SK-N-SH (cell line): ENCODE measurements at regions of chr22 and their contacts with region 1.

Region 1: GRCh38 chr22:42863349-42863961 is 6.4 kb upstream of the ARFGAP3 start:
- DNase-seq: no peak
- H3K4me3 ChIP-seq: no peak overlapping the region
- H3K27ac ChIP-seq: peak overlapping the region in 1 of 2 experiments; percentile 95; a peak in 2 of 4 replicates
- H3K4me1 ChIP-seq: no peaks in the 10 kb centered on the region
- H3K27me3 ChIP-seq: no peaks in the 10 kb centered on the region
- CTCF ChIP-seq: no peak
- EP300 ChIP-seq: no peak
- RAD21 ChIP-seq: no peak

Region 2: GRCh38 chr22:42932857-42933480 is 69.5 kb after region 1 on chr22:
- CTCF ChIA-PET with region 1: no interaction called
- POLR2A ChIA-PET with region 1: no interaction called
- DNase-seq: no peak
- H3K4me3 ChIP-seq: no peak overlapping the region
- H3K27ac ChIP-seq: peak overlapping the region in 1 of 2 experiments; percentile 99; a peak in 2 of 4 replicates
- H3K4me1 ChIP-seq: peaks cover 2 to 27% of the 10 kb centered on the region in 2 experiments; a peak in 3 of 4 replicates
- H3K27me3 ChIP-seq: no peaks in the 10 kb centered on the region
- CTCF ChIP-seq: no peak
- EP300 ChIP-seq: no peak
- RAD21 ChIP-seq: no peak

Region 3: DNA sequence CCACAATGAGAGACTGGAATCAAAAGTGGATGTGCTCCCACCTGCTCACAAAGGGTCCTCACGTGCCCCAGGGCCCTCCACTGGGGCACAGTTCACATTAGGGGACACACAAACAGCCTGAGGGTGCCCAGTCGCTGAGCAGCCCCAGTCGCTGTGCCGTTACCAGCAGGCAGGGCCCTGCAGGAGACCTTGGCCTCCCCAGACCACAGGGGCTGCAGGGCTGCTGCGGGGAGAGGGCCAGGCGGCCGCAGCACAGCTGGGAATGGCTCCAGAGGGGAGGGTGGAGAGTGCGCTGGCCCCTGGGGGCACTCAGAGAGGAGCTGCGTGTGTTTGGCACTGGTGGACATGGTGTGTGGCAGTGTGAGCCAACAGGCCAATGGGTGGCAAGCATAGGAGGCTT is 171.8 kb after region 1 on chr22:
- CTCF ChIA-PET with region 1: interaction called, 15 read pairs
- POLR2A ChIA-PET with region 1: no interaction called
- DNase-seq: no peak
- H3K4me3 ChIP-seq: no peak overlapping the region
- H3K27ac ChIP-seq: no peak overlapping the region
- H3K4me1 ChIP-seq: no peaks in the 10 kb centered on the region; a peak in 1 of 4 replicates
- H3K27me3 ChIP-seq: no peaks in the 10 kb centered on the region
- CTCF ChIP-seq: no peak
- EP300 ChIP-seq: no peak
- RAD21 ChIP-seq: no peak